ENCODE measurements at regions of chr19 and their contacts with region 1.

Region 1: DNA sequence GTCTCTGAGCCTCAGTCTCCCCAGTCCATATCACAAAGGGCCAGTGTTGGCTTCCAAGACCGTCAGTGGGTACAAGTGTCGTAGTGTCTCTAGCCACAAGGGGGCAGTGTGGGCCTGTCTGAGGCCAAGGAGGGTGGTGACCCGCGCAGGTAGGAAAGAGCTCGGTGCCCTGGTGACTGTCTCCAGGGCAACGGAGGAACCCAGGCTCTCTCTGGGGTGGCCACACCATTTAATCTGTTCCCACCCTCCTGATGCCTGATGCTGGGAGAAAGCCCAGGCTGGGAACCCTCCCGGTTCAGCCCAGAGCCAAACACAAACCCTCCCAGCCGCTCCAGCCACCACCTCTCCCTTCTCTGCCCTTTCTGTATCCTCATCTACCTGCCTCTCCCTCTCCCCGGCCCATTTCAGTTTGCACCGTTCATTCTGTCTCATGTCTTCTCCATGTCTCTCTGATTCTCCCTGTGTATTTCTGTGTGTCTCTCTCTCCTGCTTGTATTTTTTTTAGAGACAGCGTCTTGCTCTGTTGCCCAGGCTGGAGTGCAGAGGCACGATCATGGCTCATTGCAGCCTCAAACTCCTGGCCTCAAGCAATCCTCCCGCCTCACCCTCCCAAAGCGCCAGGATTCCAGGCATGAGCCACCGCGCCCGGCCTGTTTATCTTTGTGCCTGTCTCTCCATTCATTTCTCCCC is 17.5 kb upstream of the MEIS3 start:
- DNase-seq: peak; percentile 92
- H3K4me3 Mint-ChIP-seq: no peak overlapping the region
- H3K27ac Mint-ChIP-seq: no peak overlapping the region
- H3K4me1 Mint-ChIP-seq: peaks cover 19% of the 10 kb centered on the region
- H3K27me3 Mint-ChIP-seq: peaks cover 40% of the 10 kb centered on the region

Region 2: GRCh38 chr19:46766569-46767317 is 670.1 kb before region 1 on chr19:
- CTCF ChIA-PET with region 1: no interaction called
- intact Hi-C with region 1: no loop called
- DNase-seq: peak; percentile 74
- H3K4me3 Mint-ChIP-seq: no peak overlapping the region
- H3K27ac Mint-ChIP-seq: no peak overlapping the region
- H3K4me1 Mint-ChIP-seq: peaks cover 2% of the 10 kb centered on the region
- H3K27me3 Mint-ChIP-seq: no peaks in the 10 kb centered on the region

Region 3: GRCh38 chr19:47315125-47315821 is 121.6 kb before region 1 on chr19:
- CTCF ChIA-PET with region 1: no interaction called
- intact Hi-C with region 1: no loop called
- DNase-seq: peak; percentile 63
- H3K4me3 Mint-ChIP-seq: no peak overlapping the region
- H3K27ac Mint-ChIP-seq: no peak overlapping the region
- H3K4me1 Mint-ChIP-seq: peaks cover 3% of the 10 kb centered on the region
- H3K27me3 Mint-ChIP-seq: peaks cover 15% of the 10 kb centered on the region

Region 4: GRCh38 chr19:47417746-47418691 is 18.8 kb before region 1 on chr19:
- CTCF ChIA-PET with region 1: interaction called, 6 read pairs
- intact Hi-C with region 1: loop called (anchors 1 kb)
- DNase-seq: no peak
- H3K4me3 Mint-ChIP-seq: no peak overlapping the region
- H3K27ac Mint-ChIP-seq: no peak overlapping the region
- H3K4me1 Mint-ChIP-seq: peaks cover 43% of the 10 kb centered on the region
- H3K27me3 Mint-ChIP-seq: peaks cover 72% of the 10 kb centered on the region

Region 5: DNA sequence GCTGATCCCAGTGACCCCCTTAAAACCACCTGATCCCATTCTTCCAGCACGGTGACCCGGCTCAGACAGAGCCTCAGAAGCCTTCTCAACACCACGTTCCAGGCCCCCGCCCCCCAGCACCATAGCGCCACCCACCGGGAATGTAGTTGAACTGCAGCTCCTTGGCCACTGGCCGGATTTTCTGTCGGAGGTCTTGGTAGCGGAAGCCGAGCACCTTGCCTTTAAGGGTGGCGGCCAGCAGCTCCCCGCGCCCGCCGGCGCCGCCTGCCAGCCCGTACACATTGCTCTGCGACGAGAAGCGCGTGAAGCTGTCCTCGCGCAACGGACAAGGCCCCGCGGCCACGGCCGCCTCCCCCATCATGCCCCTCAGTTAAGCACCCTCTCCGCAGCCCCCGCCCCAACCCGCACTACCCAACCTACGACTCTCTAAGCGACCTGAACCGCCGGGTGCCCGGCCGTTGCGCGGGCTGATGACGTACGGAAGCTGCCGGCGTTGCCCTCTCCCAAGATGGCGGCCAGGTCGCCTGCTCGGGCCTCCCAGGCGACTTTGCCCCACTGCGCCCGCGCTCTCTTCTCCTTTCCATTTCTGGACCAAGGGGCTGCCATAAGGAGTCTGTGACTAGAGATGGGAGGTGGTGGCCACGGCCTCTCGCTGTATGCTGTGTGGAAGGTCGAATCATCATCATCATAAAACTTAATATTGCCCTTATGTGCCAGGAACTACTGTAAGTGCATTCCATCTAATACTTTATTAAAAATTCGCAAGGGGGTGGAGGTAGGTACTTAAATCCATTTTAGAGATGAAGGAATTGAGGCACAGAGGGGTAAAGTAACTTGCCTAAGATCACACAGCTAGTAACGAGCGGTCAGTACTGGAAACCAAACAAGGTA is 47.2 kb after region 1 on chr19 and contains the start of gene KPTN:
- CTCF ChIA-PET with region 1: interaction called, 17 read pairs
- intact Hi-C with region 1: loop called (anchors 1 kb)
- DNase-seq: peak; percentile 93
- H3K4me3 Mint-ChIP-seq: peak within 1 kb of the TSS; percentile 99
- H3K27ac Mint-ChIP-seq: peak within 1 kb of the TSS; percentile 98
- H3K4me1 Mint-ChIP-seq: peaks cover 31% of the 10 kb centered on the region
- H3K27me3 Mint-ChIP-seq: no peaks in the 10 kb centered on the region
- total RNA-seq, gene KPTN: 14.2 to 15.5 TPM

Region 6: GRCh38 chr19:47514869-47515588 is 78.2 kb after region 1 on chr19 and contains the start of gene NAPA:
- CTCF ChIA-PET with region 1: interaction called, 20 read pairs
- intact Hi-C with region 1: loop called (anchors 1 kb)
- DNase-seq: peak; percentile 100
- H3K4me3 Mint-ChIP-seq: peak within 1 kb of the TSS; percentile 98
- H3K27ac Mint-ChIP-seq: peak within 1 kb of the TSS; percentile 97
- H3K4me1 Mint-ChIP-seq: peaks cover 81% of the 10 kb centered on the region
- H3K27me3 Mint-ChIP-seq: no peaks in the 10 kb centered on the region
- total RNA-seq, gene NAPA: 72.5 to 75.1 TPM

Region 7: DNA sequence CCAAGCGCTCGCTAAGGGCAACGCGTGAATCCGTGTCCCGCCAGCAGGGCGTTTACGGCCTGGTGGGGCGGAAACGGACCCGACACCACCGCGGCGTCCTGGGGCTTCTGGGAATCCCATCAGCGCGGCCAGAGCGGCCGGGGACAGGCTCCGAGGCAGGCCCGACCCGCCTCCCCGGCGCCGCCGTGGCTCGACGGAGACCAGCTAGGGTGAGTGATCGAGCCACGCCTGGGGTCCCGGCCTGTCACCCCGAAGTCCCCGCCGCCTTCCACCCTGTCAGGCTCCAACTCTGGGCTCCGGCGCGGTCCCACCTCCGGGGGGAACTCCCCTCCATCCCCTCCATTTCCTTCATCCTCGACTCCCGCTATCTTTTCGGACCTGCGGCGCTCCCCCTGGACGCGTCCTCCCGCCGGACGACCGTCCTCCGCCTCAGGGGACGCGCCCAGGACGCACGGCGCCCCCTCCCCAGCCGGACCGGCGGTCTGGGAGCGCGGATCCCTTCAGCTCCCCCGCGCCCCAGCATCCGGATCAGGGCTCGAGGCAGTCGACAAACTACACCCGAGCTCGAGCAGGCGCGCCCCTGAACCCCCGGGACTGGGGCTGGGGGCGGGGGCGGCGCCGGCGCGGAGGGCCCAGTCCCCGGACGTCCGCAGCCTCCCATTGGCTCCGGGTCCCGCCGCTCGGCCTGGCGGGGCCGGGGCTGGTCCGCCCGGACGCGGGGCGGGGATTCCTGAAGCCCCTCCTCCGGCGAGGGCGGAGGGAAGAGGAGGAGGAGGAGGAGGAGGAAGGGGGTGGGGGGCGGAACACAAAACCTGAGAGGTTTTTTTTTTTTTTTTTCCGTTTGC is 171.4 kb after region 1 on chr19:
- CTCF ChIA-PET with region 1: no interaction called
- intact Hi-C with region 1: loop called (anchors 5 kb)
- DNase-seq: peak; percentile 96
- H3K4me3 Mint-ChIP-seq: peak overlapping the region; percentile 81
- H3K27ac Mint-ChIP-seq: peak overlapping the region; percentile 72
- H3K4me1 Mint-ChIP-seq: peaks cover 21% of the 10 kb centered on the region
- H3K27me3 Mint-ChIP-seq: no peaks in the 10 kb centered on the region

Region 8: GRCh38 chr19:47707135-47707925 is 270.5 kb after region 1 on chr19:
- CTCF ChIA-PET with region 1: interaction called, 64 read pairs
- intact Hi-C with region 1: loop called (anchors 1 kb)
- DNase-seq: peak; percentile 89
- H3K4me3 Mint-ChIP-seq: no peak overlapping the region
- H3K27ac Mint-ChIP-seq: no peak overlapping the region
- H3K4me1 Mint-ChIP-seq: peaks cover 4% of the 10 kb centered on the region
- H3K27me3 Mint-ChIP-seq: peaks cover 6% of the 10 kb centered on the region

Region 9: GRCh38 chr19:47713046-47714021 is 276.5 kb after region 1 on chr19 and contains the start of gene EHD2:
- CTCF ChIA-PET with region 1: interaction called, 64 read pairs
- intact Hi-C with region 1: no loop called
- DNase-seq: peak; percentile 47
- H3K4me3 Mint-ChIP-seq: peak within 1 kb of the TSS; percentile 31
- H3K27ac Mint-ChIP-seq: no peak within 1 kb of the TSS
- H3K4me1 Mint-ChIP-seq: peaks cover 7% of the 10 kb centered on the region
- H3K27me3 Mint-ChIP-seq: peaks cover 35% of the 10 kb centered on the region
- total RNA-seq, gene EHD2: 0.27 to 0.41 TPM

Measured in activated naive CD4-positive, alpha-beta T cell treated with anti-CD3 and anti-CD28 coated beads for 36 hours (primary cell).